ENCODE measurements at regions of chr1 and their contacts with region 1.

Region 1: GRCh38 chr1:155250633-155251449 is 4.4 kb downstream of the ENTREP3 start:
- DNase-seq: peak; percentile 94 to 98
- H3K4me3 ChIP-seq: peak overlapping the region; percentile 11 to 37 (median 32)
- H3K27ac ChIP-seq: peak overlapping the region in 4 of 5 donors; percentile 17 to 79 (median 46)
- H3K4me1 ChIP-seq: peaks cover 30 to 38% (median 35%) of the 10 kb centered on the region in 4 donors
- H3K27me3 ChIP-seq: no peaks in the 10 kb centered on the region
- CTCF ChIP-seq: peak in 6 of 7 experiments; percentile 58 to 99 (median 98)
- EP300 ChIP-seq: no peak
- POLR2A ChIP-seq: no peak

Region 2: GRCh38 chr1:155392898-155393411 is 142.1 kb after region 1 on chr1:
- intact Hi-C with region 1: no loop called
- DNase-seq: peak; percentile 40 to 61
- H3K4me3 ChIP-seq: no peak overlapping the region
- H3K27ac ChIP-seq: peak overlapping the region; percentile 56 to 88 (median 72)
- H3K4me1 ChIP-seq: peaks cover 5 to 32% (median 10%) of the 10 kb centered on the region in 4 donors
- H3K27me3 ChIP-seq: no peaks in the 10 kb centered on the region
- CTCF ChIP-seq: no peak
- EP300 ChIP-seq: no peak
- POLR2A ChIP-seq: no peak

Region 3: GRCh38 chr1:155455588-155456195 is 204.9 kb after region 1 on chr1:
- intact Hi-C with region 1: no loop called
- DNase-seq: peak in 1 of 2 donors; percentile 26
- H3K4me3 ChIP-seq: no peak overlapping the region
- H3K27ac ChIP-seq: no peak overlapping the region
- H3K4me1 ChIP-seq: peaks cover 4 to 18% (median 11%) of the 10 kb centered on the region in 4 donors
- H3K27me3 ChIP-seq: no peaks in the 10 kb centered on the region
- CTCF ChIP-seq: no peak
- EP300 ChIP-seq: no peak
- POLR2A ChIP-seq: no peak

Region 4: DNA sequence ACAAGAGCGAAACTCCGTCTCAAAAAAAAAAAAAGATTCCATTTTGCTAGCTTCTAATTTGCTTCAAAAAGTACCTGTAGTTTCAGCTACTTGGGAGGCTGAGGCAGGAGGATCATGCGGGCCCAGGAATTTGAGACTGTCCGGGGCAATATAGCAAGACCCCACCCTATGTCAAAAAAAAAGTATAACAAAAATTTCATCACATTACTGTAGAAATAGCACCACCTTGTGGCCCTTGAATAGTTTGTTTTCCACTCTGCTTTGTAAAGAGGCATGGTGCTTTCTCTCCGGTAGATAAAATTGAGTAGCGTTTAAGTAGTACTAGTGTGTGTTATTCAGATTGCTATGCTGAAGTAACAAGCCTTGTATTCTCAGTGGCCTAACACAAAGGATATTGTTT is 340.9 kb after region 1 on chr1:
- intact Hi-C with region 1: loop called (anchors 10 kb)
- DNase-seq: peak in 1 of 2 donors; percentile 81
- H3K4me3 ChIP-seq: no peak overlapping the region
- H3K27ac ChIP-seq: no peak overlapping the region
- H3K4me1 ChIP-seq: peaks cover 0 to 4% (median 0%) of the 10 kb centered on the region in 4 donors
- H3K27me3 ChIP-seq: no peaks in the 10 kb centered on the region
- CTCF ChIP-seq: peak in 5 of 7 experiments; percentile 20 to 54 (median 45)
- EP300 ChIP-seq: no peak
- POLR2A ChIP-seq: no peak